B cell (primary cell): ENCODE measurements at regions of chr1 and their contacts with region 1.

Region 1: DNA sequence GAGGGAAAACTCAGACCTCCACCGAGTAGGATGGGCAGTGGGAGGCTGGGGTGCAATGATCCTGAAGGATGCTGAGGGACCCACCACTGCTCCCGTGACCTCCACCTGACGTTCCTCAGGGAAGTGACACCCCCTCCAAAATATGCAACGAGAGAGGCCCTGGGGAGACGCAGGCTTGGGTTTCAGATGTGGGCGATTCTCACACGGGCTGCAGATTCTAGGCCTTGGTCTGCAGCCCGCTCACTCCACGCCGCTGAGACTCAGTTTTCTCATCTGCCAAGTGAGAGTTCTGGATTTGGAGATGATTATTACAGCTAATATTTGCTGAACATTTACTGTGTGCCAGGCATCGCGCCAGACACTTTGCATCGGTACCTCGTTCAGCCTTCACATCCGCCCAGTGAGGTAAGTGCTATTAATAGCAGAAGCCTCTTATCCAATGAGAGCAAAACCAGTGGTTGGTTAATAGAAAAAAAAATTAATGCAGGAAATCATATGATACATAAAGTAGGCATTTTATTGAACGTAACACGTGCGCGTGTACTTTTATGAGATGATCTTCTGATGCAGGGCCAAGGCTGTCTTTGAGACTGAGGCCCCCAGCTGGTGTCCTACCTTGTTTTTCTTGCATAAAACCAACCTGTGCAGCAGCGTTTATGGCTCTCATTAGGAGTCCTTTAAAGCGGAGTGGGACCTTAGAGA is 102.0 kb upstream of the RUNX3 start:
- DNase-seq: peak; percentile 92
- ATAC-seq: peak; percentile 68
- H3K4me3 ChIP-seq: peak overlapping the region in 1 of 5 experiments; percentile 29
- H3K4me3 Mint-ChIP-seq: peak overlapping the region; percentile 89
- H3K27ac ChIP-seq: peak overlapping the region; percentile 82 to 89
- H3K27ac Mint-ChIP-seq: peak overlapping the region; percentile 98
- H3K4me1 ChIP-seq: peaks cover 77 to 92% of the 10 kb centered on the region in 2 donors
- H3K4me1 Mint-ChIP-seq: peaks cover 79% of the 10 kb centered on the region
- H3K27me3 ChIP-seq: no peaks in the 10 kb centered on the region
- H3K27me3 Mint-ChIP-seq: no peaks in the 10 kb centered on the region
- CTCF ChIP-seq: peak; percentile 38

Region 2: GRCh38 chr1:24186993-24187805 is 844.9 kb before region 1 on chr1 and contains the start of gene IFNLR1:
- CTCF ChIA-PET with region 1: no interaction called
- POLR2A ChIA-PET with region 1: no interaction called
- intact Hi-C with region 1: loop called (anchors 2 kb)
- DNase-seq: peak; percentile 87
- ATAC-seq: peak; percentile 57
- H3K4me3 ChIP-seq: peak within 1 kb of the TSS; percentile 65 to 85 (median 77)
- H3K4me3 Mint-ChIP-seq: peak within 1 kb of the TSS; percentile 95
- H3K27ac ChIP-seq: peak within 1 kb of the TSS; percentile 82
- H3K27ac Mint-ChIP-seq: peak within 1 kb of the TSS; percentile 93
- H3K4me1 ChIP-seq: peaks cover 69 to 78% of the 10 kb centered on the region in 2 donors
- H3K4me1 Mint-ChIP-seq: peaks cover 83% of the 10 kb centered on the region
- H3K27me3 ChIP-seq: no peaks in the 10 kb centered on the region
- H3K27me3 Mint-ChIP-seq: no peaks in the 10 kb centered on the region
- CTCF ChIP-seq: no peak
- total RNA-seq, gene IFNLR1: 38.0 and 39.7 TPM in 2 replicates

Region 3: GRCh38 chr1:24964811-24965570 is 67.1 kb before region 1 on chr1:
- CTCF ChIA-PET with region 1: interaction called, 131 read pairs
- POLR2A ChIA-PET with region 1: interaction called, 5 read pairs
- intact Hi-C with region 1: loop called (anchors 1 kb)
- DNase-seq: peak; percentile 93
- ATAC-seq: peak; percentile 88
- H3K4me3 ChIP-seq: peak overlapping the region in 4 of 5 experiments; percentile 10 to 40 (median 24)
- H3K4me3 Mint-ChIP-seq: peak overlapping the region; percentile 79
- H3K27ac ChIP-seq: peak overlapping the region; percentile 75 to 77
- H3K27ac Mint-ChIP-seq: peak overlapping the region; percentile 89
- H3K4me1 ChIP-seq: peaks cover 21 to 44% of the 10 kb centered on the region in 2 donors
- H3K4me1 Mint-ChIP-seq: peaks cover 50% of the 10 kb centered on the region
- H3K27me3 ChIP-seq: no peaks in the 10 kb centered on the region
- H3K27me3 Mint-ChIP-seq: no peaks in the 10 kb centered on the region
- CTCF ChIP-seq: no peak

Region 4: GRCh38 chr1:24996983-24997893 is 34.9 kb before region 1 on chr1:
- CTCF ChIA-PET with region 1: interaction called, 9 read pairs
- POLR2A ChIA-PET with region 1: no interaction called
- intact Hi-C with region 1: loop called (anchors 5 kb)
- DNase-seq: peak; percentile 41
- ATAC-seq: peak; percentile 37
- H3K4me3 ChIP-seq: no peak overlapping the region
- H3K4me3 Mint-ChIP-seq: no peak overlapping the region
- H3K27ac ChIP-seq: no peak overlapping the region
- H3K27ac Mint-ChIP-seq: peak overlapping the region; percentile 39
- H3K4me1 ChIP-seq: peaks cover 6 to 29% of the 10 kb centered on the region in 2 donors
- H3K4me1 Mint-ChIP-seq: peaks cover 19% of the 10 kb centered on the region
- H3K27me3 ChIP-seq: no peaks in the 10 kb centered on the region
- H3K27me3 Mint-ChIP-seq: no peaks in the 10 kb centered on the region
- CTCF ChIP-seq: no peak

Region 5: DNA sequence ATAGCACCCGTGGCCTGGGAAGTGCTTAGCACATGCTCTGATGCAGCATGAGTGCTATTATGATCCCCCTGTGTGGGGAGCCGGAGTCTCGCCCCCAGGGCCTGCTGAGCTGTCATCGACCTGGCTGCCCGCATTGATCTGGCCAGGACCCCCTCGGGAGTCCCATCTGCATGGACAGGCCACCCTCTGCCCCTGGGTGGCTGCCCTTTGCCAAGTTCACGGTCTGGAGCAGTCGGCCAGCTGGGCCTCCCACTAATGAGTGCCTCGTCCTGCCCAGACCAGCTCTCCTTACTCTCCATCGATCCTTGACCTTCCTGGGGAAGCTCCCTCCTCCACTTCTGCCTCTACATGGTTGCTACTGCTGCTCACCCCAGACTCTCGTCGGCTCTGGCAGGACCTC is 19.8 kb after region 1 on chr1:
- CTCF ChIA-PET with region 1: no interaction called
- POLR2A ChIA-PET with region 1: no interaction called
- intact Hi-C with region 1: no loop called
- DNase-seq: no peak
- ATAC-seq: no peak
- H3K4me3 ChIP-seq: no peak overlapping the region
- H3K4me3 Mint-ChIP-seq: no peak overlapping the region
- H3K27ac ChIP-seq: no peak overlapping the region
- H3K27ac Mint-ChIP-seq: no peak overlapping the region
- H3K4me1 ChIP-seq: peaks cover 0 to 1% of the 10 kb centered on the region in 2 donors
- H3K4me1 Mint-ChIP-seq: peaks cover 2% of the 10 kb centered on the region
- H3K27me3 ChIP-seq: peaks cover 0 to 14% (median 5%) of the 10 kb centered on the region in 4 experiments
- H3K27me3 Mint-ChIP-seq: peaks cover 37% of the 10 kb centered on the region
- CTCF ChIP-seq: no peak